CD4-positive, alpha-beta memory T cell (primary cell): ENCODE measurements at regions of chr12 and their contacts with region 1.

Region 1: DNA sequence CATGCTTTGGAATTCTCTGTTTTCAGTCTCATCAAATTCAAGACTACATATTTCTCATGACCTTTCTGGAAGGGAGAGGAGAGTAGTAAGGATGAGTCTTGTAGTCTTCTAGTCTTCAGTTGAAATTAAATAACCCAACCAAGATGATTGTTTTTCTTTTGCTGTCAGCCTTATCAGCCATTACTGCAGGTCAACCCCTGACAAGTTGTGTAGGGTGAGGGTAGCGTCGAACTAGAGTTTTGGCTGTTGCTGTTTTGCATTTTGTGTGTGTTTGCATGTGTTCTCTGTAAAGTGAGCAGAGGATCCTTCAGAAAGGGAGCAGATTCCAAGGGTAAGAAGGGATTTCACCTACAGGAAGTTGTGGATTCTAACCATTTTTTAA is 28.4 kb downstream of the DIP2B start:
- DNase-seq: no peak
- H3K4me3 ChIP-seq: no peak overlapping the region
- H3K4me3 Mint-ChIP-seq: no peak overlapping the region
- H3K27ac ChIP-seq: peak overlapping the region; percentile 48
- H3K27ac Mint-ChIP-seq: no peak overlapping the region
- H3K4me1 ChIP-seq: peaks cover 44% of the 10 kb centered on the region
- H3K4me1 Mint-ChIP-seq: peaks cover 26 to 29% (median 28%) of the 10 kb centered on the region in 4 donors
- H3K27me3 ChIP-seq: no peaks in the 10 kb centered on the region
- H3K27me3 Mint-ChIP-seq: no peaks in the 10 kb centered on the region

Region 2: GRCh38 chr12:50517456-50518048 is 15.6 kb before region 1 on chr12:
- CTCF ChIA-PET with region 1: interaction called, 4 read pairs
- POLR2A ChIA-PET with region 1: interaction called, 21 read pairs
- intact Hi-C with region 1: loop called (anchors 2 kb)
- DNase-seq: peak in 3 of 5 donors; percentile 15 to 31 (median 20)
- H3K4me3 ChIP-seq: no peak overlapping the region
- H3K4me3 Mint-ChIP-seq: no peak overlapping the region
- H3K27ac ChIP-seq: peak overlapping the region; percentile 33
- H3K27ac Mint-ChIP-seq: no peak overlapping the region
- H3K4me1 ChIP-seq: peaks cover 87% of the 10 kb centered on the region
- H3K4me1 Mint-ChIP-seq: peaks cover 37 to 67% (median 50%) of the 10 kb centered on the region in 4 donors
- H3K27me3 ChIP-seq: no peaks in the 10 kb centered on the region
- H3K27me3 Mint-ChIP-seq: no peaks in the 10 kb centered on the region

Region 3: GRCh38 chr12:50603817-50604639 is 70.8 kb after region 1 on chr12:
- CTCF ChIA-PET with region 1: no interaction called
- POLR2A ChIA-PET with region 1: no interaction called
- intact Hi-C with region 1: no loop called
- DNase-seq: no peak
- H3K4me3 ChIP-seq: no peak overlapping the region
- H3K4me3 Mint-ChIP-seq: no peak overlapping the region
- H3K27ac ChIP-seq: no peak overlapping the region
- H3K27ac Mint-ChIP-seq: no peak overlapping the region
- H3K4me1 ChIP-seq: peaks cover 3% of the 10 kb centered on the region
- H3K4me1 Mint-ChIP-seq: peaks cover 16 to 32% (median 23%) of the 10 kb centered on the region in 4 donors
- H3K27me3 ChIP-seq: no peaks in the 10 kb centered on the region
- H3K27me3 Mint-ChIP-seq: no peaks in the 10 kb centered on the region

Region 4: GRCh38 chr12:51752234-51752889 is 1219.2 kb after region 1 on chr12:
- CTCF ChIA-PET with region 1: no interaction called
- POLR2A ChIA-PET with region 1: no interaction called
- intact Hi-C with region 1: no loop called
- DNase-seq: no peak
- H3K4me3 ChIP-seq: no peak overlapping the region
- H3K4me3 Mint-ChIP-seq: no peak overlapping the region
- H3K27ac ChIP-seq: no peak overlapping the region
- H3K27ac Mint-ChIP-seq: no peak overlapping the region
- H3K4me1 ChIP-seq: no peaks in the 10 kb centered on the region
- H3K4me1 Mint-ChIP-seq: no peaks in the 10 kb centered on the region
- H3K27me3 ChIP-seq: no peaks in the 10 kb centered on the region
- H3K27me3 Mint-ChIP-seq: peaks cover 13 to 29% of the 10 kb centered on the region in 2 donors